Activated T-helper 2 cell treated with anti-CD3 and anti-CD28 coated beads, Interferon-gamma antibody, Interleukin-2, Interleukin-4, amounts not matched to agents 10 μg/mL and 5 μg/mL and 100 μg/mL, durations not matched to agents 14 hours and 24 hours and 36 hours (primary cell): ENCODE measurements at regions of chr2 and their contacts with region 1.

Region 1: GRCh38 chr2:168210895-168211570 is 36.4 kb downstream of the STK39 start:
- DNase-seq: no peak
- H3K4me3 Mint-ChIP-seq: peak overlapping the region; percentile 24
- H3K27ac Mint-ChIP-seq: peak overlapping the region; percentile 96
- H3K4me1 Mint-ChIP-seq: peaks cover 64% of the 10 kb centered on the region
- H3K27me3 Mint-ChIP-seq: no peaks in the 10 kb centered on the region

Region 2: GRCh38 chr2:168136392-168136977 is 74.5 kb before region 1 on chr2:
- intact Hi-C with region 1: loop called (anchors 2 kb)
- DNase-seq: no peak
- H3K4me3 Mint-ChIP-seq: no peak overlapping the region
- H3K27ac Mint-ChIP-seq: no peak overlapping the region
- H3K4me1 Mint-ChIP-seq: peaks cover 9% of the 10 kb centered on the region
- H3K27me3 Mint-ChIP-seq: no peaks in the 10 kb centered on the region

Region 3: DNA sequence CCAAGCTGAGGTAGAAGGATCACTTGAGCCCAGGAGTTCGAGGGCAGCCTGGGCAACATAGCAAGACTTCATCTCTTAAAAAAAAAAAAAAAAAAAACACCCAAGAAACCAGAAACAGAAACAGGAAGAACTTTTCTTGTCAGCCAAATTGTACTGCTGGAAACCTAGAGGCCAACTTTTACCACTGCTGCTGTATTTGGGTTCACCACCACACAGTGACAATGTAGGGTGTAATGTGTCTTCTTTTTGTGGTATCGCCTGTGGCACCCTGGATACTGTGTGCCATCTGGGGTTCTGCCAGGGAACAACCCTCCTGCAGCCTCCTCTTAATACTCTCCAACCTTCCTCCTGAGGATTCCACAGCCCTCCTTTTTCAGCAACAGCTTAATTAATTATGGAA is 36.3 kb before region 1 on chr2:
- intact Hi-C with region 1: loop called (anchors 2 kb)
- DNase-seq: peak; percentile 26
- H3K4me3 Mint-ChIP-seq: peak overlapping the region; percentile 47
- H3K27ac Mint-ChIP-seq: peak overlapping the region; percentile 53
- H3K4me1 Mint-ChIP-seq: peaks cover 60% of the 10 kb centered on the region
- H3K27me3 Mint-ChIP-seq: no peaks in the 10 kb centered on the region

Region 4: DNA sequence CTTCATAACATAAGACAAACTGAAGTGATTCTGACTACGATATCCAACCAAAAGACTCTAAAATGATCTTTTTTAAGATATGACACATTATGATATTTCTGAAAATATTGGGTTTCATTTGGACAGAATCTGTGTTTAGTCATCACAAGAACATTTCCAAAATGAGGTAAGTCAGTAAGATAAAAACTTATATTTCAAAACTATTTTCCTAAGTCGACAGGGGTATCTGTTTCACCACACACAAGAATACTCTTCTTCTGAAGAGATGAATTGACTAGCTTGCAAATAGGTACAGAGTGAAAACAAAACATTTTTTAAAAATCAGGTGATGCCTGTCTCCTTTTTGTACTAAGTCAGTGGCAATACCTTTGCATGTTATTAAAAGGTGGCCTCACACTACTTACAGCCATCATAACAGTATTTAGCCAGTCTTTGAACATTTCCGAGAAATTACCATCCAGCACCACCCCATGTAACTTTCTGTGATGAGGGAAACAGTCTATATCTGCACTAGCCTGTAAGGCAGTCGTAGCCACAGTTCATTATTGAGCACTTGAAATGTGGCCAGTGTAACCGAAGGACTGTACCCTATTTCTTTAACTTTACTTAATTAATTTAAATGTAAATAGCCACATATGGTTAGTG is 22.9 kb after region 1 on chr2:
- intact Hi-C with region 1: loop called (anchors 1 kb)
- DNase-seq: no peak
- H3K4me3 Mint-ChIP-seq: no peak overlapping the region
- H3K27ac Mint-ChIP-seq: peak overlapping the region; percentile 63
- H3K4me1 Mint-ChIP-seq: peaks cover 35% of the 10 kb centered on the region
- H3K27me3 Mint-ChIP-seq: no peaks in the 10 kb centered on the region

Region 5: DNA sequence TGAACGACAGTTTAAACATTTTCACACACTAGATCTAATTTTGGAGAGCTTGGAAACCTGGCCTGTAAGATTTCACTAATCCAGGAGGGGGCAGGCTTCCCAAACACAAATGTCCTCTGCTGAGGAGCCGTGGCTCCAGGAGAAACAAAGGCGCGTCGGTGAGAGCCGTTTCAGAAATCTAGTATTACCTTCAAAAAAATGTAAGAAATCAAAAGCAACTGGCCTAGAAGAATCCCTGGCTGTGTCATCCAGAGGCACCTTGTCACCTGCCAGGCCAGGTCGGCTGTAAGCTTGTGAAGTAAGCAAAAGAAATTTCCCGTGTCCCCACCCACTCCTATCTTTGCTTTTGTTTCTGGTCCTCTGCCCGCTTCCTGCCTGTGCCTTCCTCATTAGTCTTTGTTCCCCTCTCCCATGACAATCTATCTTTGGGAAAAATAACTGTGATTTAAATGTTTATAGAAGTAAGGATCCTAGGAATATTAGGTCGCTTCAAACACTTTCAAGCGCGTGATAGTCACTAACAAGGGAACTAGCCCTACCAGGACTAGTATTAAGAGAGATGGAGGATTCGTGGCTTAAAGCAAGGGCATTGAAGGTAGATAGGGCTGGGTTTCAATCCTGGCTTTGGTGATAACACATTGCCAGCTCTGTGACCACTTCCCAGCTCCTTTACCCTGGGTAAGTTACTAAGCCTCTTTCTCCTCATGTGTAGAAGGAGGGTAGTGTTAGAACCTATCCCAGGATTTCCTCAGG is 135.9 kb after region 1 on chr2:
- intact Hi-C with region 1: no loop called
- DNase-seq: peak; percentile 53
- H3K4me3 Mint-ChIP-seq: peak overlapping the region; percentile 81
- H3K27ac Mint-ChIP-seq: no peak overlapping the region
- H3K4me1 Mint-ChIP-seq: peaks cover 4% of the 10 kb centered on the region
- H3K27me3 Mint-ChIP-seq: peaks cover 19% of the 10 kb centered on the region

Region 6: GRCh38 chr2:168432565-168433186 is 221.6 kb after region 1 on chr2:
- intact Hi-C with region 1: loop called (anchors 1 kb)
- DNase-seq: peak; percentile 46
- H3K4me3 Mint-ChIP-seq: peak overlapping the region; percentile 14
- H3K27ac Mint-ChIP-seq: peak overlapping the region; percentile 84
- H3K4me1 Mint-ChIP-seq: peaks cover 35% of the 10 kb centered on the region
- H3K27me3 Mint-ChIP-seq: no peaks in the 10 kb centered on the region